Dendritic cell treated with granulocyte-macrophage colony-stimulating factor and Interleukin-4, amounts not matched to agents 40 ng/mL and 50 ng/mL, for 4 days (primary cell): ENCODE measurements at regions of chr2 and their contacts with region 1.

Region 1: DNA sequence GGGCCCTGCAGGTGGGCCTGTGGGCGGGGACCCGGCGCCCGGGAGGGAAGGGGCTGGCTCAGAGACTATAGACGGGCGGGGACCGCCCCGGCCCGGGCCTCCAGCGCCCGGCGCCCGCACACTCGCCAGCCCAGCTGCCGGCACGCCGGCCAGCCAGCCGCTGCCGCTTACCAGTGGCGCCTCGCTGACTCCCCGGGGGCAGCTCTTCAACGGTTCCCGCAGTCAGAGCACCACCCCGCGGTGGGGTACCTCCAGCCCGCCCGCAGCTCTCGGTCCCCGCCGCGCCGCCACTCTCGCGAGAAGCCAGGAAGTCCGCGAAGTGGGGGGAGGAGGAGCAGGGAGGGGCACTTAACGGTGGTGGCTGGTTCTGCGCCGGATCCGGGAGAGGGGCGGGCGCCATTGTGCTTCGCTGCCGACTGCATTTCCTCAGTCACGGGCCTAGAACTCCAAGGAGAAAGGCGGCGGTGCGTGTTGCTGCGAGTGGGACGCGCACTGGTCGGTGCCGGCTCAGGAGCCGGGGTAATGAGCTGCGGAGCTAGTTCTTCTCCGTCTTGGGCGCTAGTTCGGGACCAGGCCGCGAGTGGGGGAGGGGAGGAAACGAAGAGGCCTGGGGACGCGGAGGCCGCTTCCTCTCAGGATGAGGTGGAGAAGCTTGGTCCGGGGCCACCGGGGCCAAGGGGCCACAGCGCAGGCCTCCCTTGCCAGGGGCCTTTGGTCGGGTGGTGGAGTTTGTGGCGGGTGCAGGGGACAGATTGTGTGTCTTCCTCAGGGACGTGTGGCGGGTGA is at the start of gene MARCHF7:
- H3K4me3 Mint-ChIP-seq: peak within 1 kb of the TSS; percentile 94
- H3K27ac Mint-ChIP-seq: peak within 1 kb of the TSS; percentile 99
- H3K4me1 Mint-ChIP-seq: peaks cover 30% of the 10 kb centered on the region
- H3K27me3 Mint-ChIP-seq: no peaks in the 10 kb centered on the region

Region 2: GRCh38 chr2:159797543-159798375 is 85.4 kb after region 1 on chr2 and contains the start of gene CD302:
- intact Hi-C with region 1: loop called (anchors 5 kb)
- H3K4me3 Mint-ChIP-seq: peak within 1 kb of the TSS; percentile 92
- H3K27ac Mint-ChIP-seq: peak within 1 kb of the TSS; percentile 99
- H3K4me1 Mint-ChIP-seq: peaks cover 62% of the 10 kb centered on the region
- H3K27me3 Mint-ChIP-seq: no peaks in the 10 kb centered on the region